AG04450 (cell line): ENCODE measurements at regions of chr5 and their contacts with region 1.

Region 1: DNA sequence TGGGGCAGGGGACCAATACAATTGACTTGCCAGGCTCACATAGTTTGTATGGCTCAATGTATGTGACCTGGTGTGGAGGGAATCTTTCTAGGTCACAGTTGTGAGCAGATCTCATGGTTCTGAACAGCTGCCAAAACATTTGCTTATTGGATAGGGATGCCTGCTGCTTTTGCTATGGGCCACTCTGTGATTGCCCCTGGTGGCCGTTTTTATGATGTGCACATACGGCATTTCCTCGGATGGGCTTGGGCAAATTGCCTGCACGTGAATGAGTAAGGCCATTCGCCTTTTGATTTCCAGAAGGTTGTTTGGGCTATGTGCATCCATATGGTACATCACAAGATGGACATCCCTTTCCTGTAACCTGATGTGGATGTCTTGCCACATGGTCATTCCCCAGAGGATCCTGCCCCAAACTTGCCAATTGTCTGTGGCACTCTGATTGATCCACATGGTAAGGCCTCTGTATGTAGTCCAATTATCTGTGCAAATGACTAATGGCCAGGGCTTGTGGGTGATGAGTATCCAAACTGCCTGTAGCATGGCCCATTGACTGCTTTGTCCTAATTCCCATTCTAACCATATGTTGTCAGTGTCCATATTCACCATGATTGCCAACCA is 10.7 kb upstream of the SLC22A4 start:
- DNase-seq: no peak
- H3K4me3 ChIP-seq: no peak overlapping the region
- H3K27ac ChIP-seq: no peak overlapping the region
- H3K27me3 ChIP-seq: peaks cover 3% of the 10 kb centered on the region
- CTCF ChIP-seq: peak; percentile 67

Region 2: DNA sequence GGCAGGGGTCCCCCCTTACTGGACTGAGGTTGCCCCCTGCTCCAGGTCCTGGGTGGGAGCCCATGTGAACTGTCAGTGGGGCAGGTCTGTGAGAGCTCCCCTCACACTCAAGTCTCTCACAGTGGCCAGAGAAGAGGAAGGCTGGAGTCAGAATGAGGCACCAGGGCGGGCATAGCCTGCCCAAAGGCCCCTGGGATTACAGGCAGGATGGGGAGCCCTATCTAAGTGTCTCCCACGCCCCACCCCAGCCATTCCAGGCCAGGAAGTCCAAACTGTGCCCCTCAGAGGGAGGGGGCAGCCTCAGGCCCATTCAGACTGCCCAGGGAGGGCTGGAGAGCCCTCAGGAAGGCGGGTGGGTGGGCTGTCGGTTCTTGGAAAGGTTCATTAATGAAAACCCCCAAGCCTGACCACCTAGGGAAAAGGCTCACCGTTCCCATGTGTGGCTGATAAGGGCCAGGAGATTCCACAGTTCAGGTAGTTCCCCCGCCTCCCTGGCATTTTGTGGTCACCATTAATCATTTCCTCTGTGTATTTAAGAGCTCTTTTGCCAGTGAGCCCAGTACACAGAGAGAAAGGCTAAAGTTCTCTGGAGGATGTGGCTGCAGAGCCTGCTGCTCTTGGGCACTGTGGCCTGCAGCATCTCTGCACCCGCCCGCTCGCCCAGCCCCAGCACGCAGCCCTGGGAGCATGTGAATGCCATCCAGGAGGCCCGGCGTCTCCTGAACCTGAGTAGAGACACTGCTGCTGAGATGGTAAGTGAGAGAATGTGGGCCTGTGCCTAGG is 210.1 kb before region 1 on chr5 and contains the start of gene CSF2:
- CTCF ChIA-PET with region 1: no interaction called
- POLR2A ChIA-PET with region 1: no interaction called
- DNase-seq: no peak
- H3K4me3 ChIP-seq: no peak within 1 kb of the TSS
- H3K27ac ChIP-seq: no peak within 1 kb of the TSS
- H3K27me3 ChIP-seq: no peaks in the 10 kb centered on the region
- CTCF ChIP-seq: no peak
- polyA plus RNA-seq, gene CSF2: not detected in 2 replicates

Region 3: GRCh38 chr5:132272311-132273210 is 11.0 kb before region 1 on chr5:
- CTCF ChIA-PET with region 1: interaction called, 11 read pairs
- POLR2A ChIA-PET with region 1: interaction called, 4 read pairs
- DNase-seq: no peak
- H3K4me3 ChIP-seq: no peak overlapping the region
- H3K27ac ChIP-seq: no peak overlapping the region
- H3K27me3 ChIP-seq: no peaks in the 10 kb centered on the region
- CTCF ChIP-seq: peak; percentile 85